A549 (cell line): ENCODE measurements at regions of chr19 and their contacts with region 1.

Region 1: GRCh38 chr19:41706741-41707501 is 1.5 kb upstream of the CEACAM5 start:
- DNase-seq: peak; percentile 91 to 99
- ATAC-seq: peak; percentile 79 to 94
- H3K4me3 ChIP-seq: peak overlapping the region; percentile 39
- H3K27ac ChIP-seq: peak overlapping the region; percentile 65 to 84; a peak in 5 of 6 replicates
- H3K4me1 ChIP-seq: peaks cover 28% of the 10 kb centered on the region
- CTCF ChIP-seq: peak; percentile 100
- EP300 ChIP-seq: no peak
- POLR2A ChIP-seq: no peak
- RAD21 ChIP-seq: peak; percentile 61 to 86

Region 2: DNA sequence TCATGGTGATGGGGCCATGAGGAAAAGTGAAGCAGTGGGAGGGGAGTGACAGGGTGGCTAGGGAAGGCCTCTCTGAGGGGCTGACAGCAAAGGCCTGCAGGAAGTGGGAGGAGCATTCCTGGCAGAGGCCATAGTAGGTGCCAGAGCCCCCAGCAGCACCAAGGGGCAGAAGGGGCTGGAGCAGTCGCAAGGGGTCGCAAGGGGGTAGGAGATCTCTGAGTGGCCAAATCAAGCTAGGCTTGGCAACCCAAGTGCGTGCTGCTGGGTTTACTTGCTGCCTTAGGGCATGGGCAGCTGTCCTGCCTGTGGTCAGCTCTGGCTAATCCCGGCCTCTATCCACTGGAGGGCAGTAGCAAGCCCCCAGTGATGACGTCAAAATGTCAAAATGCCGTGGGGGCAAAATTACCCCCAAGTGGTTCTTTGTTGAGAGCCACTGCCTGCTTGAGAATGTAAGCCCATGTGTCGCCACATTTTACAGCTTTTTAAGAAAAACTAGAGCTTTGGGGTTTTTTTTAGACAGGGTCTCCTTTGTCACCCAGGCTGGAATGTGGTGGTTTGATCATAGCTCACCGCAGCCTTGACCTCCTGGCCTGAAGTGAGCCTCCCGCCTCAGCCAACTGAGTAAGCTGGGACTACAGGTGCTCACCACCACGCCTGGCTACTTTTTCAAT is 385.2 kb before region 1 on chr19:
- CTCF ChIA-PET with region 1: no interaction called
- POLR2A ChIA-PET with region 1: no interaction called
- DNase-seq: peak; percentile 76 to 95
- ATAC-seq: peak; percentile 10 to 53; a peak in 3 of 6 replicates
- H3K4me3 ChIP-seq: no peak overlapping the region
- H3K27ac ChIP-seq: peak overlapping the region; percentile 81 to 91; a peak in 5 of 6 replicates
- H3K4me1 ChIP-seq: peaks cover 56% of the 10 kb centered on the region
- CTCF ChIP-seq: peak; percentile 88
- EP300 ChIP-seq: no peak
- POLR2A ChIP-seq: no peak
- RAD21 ChIP-seq: peak; percentile 61 to 62; a peak in 4 of 5 replicates

Region 3: DNA sequence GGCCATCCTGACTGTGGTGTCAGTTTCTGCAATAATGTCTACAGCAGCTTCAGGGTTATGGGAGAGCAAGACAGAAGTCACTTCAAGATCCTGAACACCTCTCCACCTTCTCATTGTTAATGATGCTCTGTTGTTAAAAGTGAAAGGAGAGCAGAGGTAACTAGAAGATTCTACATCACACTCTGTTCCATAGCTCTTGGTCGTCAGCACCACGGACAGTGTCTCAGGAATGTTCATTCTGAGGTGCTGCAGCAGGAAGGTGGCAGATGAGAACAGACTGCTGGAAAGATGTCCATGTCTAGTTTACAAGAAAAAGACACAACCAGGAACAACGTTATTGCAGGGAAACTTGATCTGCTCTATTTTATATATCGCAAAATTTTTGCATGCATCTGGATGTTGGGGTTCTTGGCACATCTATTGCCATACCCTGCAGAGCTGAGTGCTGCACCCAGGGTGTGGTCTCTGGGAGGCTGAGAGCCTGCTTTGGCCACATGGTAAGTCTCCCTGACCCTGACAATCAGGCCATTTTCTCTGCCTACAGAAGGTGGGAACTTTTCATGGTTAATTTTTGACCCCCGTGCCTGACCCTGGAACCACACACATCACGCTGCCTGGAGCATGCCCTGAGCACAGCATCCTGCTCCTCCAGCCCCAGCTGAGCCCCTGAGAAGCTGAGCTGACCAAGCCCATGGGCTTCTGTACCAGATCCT is 118.3 kb before region 1 on chr19:
- CTCF ChIA-PET with region 1: interaction called, 16 read pairs
- POLR2A ChIA-PET with region 1: no interaction called
- DNase-seq: peak; percentile 44 to 58
- ATAC-seq: peak; percentile 61 to 72; a peak in 5 of 6 replicates
- H3K4me3 ChIP-seq: no peak overlapping the region
- H3K27ac ChIP-seq: no peak overlapping the region
- H3K4me1 ChIP-seq: no peaks in the 10 kb centered on the region
- CTCF ChIP-seq: no peak
- EP300 ChIP-seq: no peak
- POLR2A ChIP-seq: no peak
- RAD21 ChIP-seq: no peak

Region 4: GRCh38 chr19:41657157-41657556 is 49.8 kb before region 1 on chr19:
- CTCF ChIA-PET with region 1: interaction called, 67 read pairs
- POLR2A ChIA-PET with region 1: no interaction called
- DNase-seq: no peak
- ATAC-seq: no peak
- H3K4me3 ChIP-seq: no peak overlapping the region
- H3K27ac ChIP-seq: no peak overlapping the region
- H3K4me1 ChIP-seq: no peaks in the 10 kb centered on the region
- CTCF ChIP-seq: no peak
- EP300 ChIP-seq: no peak
- POLR2A ChIP-seq: no peak
- RAD21 ChIP-seq: no peak

Region 5: DNA sequence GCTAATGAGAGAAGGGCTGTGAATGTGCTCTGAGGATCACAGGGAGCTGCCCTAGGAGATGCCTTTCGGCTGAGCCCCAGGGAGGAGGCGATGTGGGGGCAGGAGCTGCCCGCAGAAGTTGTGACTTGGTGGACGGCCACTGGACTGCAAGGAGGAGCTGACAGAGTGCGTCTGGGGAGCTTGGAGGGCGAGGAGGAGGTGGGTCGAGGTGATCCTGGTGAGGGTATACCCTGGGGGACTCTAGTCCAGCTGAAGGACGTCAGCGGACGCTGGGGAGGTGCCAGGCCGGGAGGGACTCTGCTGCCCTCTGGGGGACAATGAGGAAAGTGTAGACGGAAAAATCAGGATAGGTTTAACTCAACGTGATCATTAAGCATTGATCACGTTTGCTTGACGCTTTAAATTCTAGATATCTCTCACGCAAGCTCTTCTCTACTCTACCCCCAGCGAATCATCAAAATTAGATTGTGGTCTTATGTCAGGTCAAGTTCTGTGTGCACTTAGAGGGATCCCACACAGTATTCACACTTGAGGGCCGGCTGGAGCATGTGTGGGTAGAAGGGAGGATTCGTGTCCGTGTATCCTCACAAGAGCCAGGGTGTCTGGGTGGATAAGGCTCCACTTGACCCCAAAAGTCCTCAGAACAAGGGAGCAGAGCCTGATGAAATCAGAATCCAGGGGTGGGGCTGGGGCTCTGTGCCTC is 15.5 kb before region 1 on chr19:
- CTCF ChIA-PET with region 1: interaction called, 358 read pairs
- POLR2A ChIA-PET with region 1: no interaction called
- DNase-seq: peak; percentile 42 to 76
- ATAC-seq: peak; percentile 72 to 88
- H3K4me3 ChIP-seq: no peak overlapping the region
- H3K27ac ChIP-seq: no peak overlapping the region
- H3K4me1 ChIP-seq: no peaks in the 10 kb centered on the region
- CTCF ChIP-seq: peak; percentile 77
- EP300 ChIP-seq: no peak
- POLR2A ChIP-seq: no peak
- RAD21 ChIP-seq: peak; percentile 51 to 67; a peak in 4 of 5 replicates

Region 6: DNA sequence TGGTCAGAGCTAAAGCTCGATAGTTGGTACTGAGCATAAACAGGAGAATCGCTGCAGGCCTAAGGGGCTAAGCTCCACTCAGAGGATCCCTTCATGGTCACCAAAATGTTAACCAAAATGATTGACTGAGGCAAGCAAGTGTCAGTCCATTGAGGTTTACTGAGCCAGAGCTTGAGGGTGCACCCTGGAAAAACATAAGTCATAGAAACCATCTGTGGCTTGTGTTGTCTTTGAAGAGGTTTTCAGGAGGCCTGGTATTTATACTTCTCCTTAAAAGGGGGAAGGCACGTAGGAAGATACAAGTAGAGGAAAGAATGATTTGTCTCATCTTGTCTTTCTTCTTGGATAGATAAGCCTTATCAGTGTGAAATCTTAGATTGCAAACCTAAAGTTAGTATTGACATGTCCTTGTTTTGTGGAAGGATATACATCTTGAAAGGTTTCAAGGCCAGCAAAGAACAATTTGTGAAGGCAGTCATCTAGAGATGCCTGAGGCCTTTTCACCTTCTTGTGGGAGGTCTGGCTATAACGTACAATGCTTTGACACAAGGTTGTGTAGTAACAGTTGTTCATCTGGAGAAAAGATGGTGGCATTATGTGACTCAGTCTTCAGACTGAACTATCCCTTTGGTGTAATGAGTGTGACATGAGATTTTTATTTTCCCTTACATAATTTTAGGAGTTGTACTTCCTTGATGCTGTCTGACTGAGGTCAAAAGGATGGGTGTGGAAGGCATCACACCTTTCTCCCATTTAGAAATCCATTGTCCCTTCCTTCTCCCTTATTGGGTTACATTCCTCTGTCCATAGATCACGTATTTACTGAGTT is 33.7 kb after region 1 on chr19:
- CTCF ChIA-PET with region 1: interaction called, 95 read pairs
- POLR2A ChIA-PET with region 1: no interaction called
- DNase-seq: no peak
- ATAC-seq: no peak
- H3K4me3 ChIP-seq: no peak overlapping the region
- H3K27ac ChIP-seq: no peak overlapping the region
- H3K4me1 ChIP-seq: no peaks in the 10 kb centered on the region
- CTCF ChIP-seq: no peak
- EP300 ChIP-seq: no peak
- POLR2A ChIP-seq: no peak
- RAD21 ChIP-seq: no peak

Region 7: DNA sequence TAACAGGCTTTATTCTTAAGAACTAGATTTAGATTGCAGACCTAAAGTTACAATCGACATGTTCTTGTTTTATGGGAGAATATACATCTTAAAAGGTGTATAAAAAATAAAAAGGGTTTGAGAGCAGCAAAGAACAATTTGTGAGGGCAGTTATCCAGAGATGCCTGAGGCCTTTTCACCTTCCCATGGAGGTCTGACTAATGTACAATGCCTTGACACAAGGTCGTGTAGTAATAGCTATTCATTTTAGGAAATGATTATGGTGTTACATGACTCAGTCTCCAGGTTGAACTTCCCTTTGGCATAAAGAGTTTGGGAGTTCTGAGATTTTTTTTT is 68.4 kb after region 1 on chr19:
- CTCF ChIA-PET with region 1: interaction called, 28 read pairs
- POLR2A ChIA-PET with region 1: no interaction called
- DNase-seq: peak in 1 of 2 experiments; percentile 50
- ATAC-seq: no peak
- H3K4me3 ChIP-seq: no peak overlapping the region
- H3K27ac ChIP-seq: no peak overlapping the region
- H3K4me1 ChIP-seq: peaks cover 5% of the 10 kb centered on the region; the same call in 2 of the 3 replicates
- CTCF ChIP-seq: no peak
- EP300 ChIP-seq: no peak
- POLR2A ChIP-seq: no peak
- RAD21 ChIP-seq: no peak

Region 8: DNA sequence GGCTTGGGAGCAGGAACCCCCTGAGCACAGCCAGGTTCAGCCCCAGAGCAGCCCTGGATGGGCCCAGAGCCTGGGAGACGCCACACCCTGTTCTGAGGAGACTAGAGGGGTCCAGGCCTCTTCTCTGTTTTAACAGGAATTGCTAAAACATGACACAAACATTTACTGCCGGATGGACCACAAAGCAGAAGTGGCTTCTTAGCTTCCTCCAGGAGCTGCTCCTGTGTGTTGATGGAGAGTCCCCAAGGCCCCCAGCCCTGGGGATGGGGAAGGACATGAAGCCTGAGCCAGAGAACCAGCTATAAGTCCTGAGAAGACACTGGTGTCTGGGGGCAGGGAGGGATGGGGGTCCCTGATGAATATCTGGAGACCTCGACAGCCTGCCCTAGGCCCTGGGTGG is 104.1 kb after region 1 on chr19:
- CTCF ChIA-PET with region 1: interaction called, 11 read pairs
- POLR2A ChIA-PET with region 1: no interaction called
- DNase-seq: no peak
- ATAC-seq: no peak
- H3K4me3 ChIP-seq: no peak overlapping the region
- H3K27ac ChIP-seq: no peak overlapping the region
- H3K4me1 ChIP-seq: no peaks in the 10 kb centered on the region
- CTCF ChIP-seq: no peak
- EP300 ChIP-seq: no peak
- POLR2A ChIP-seq: no peak
- RAD21 ChIP-seq: no peak

Region 9: GRCh38 chr19:41883821-41884733 is 177.2 kb after region 1 on chr19:
- CTCF ChIA-PET with region 1: no interaction called
- POLR2A ChIA-PET with region 1: no interaction called
- DNase-seq: peak; percentile 100
- ATAC-seq: peak; percentile 78 to 97
- H3K4me3 ChIP-seq: peak overlapping the region; percentile 78
- H3K27ac ChIP-seq: peak overlapping the region; percentile 81 to 87
- H3K4me1 ChIP-seq: peaks cover 15% of the 10 kb centered on the region
- CTCF ChIP-seq: no peak; the same call in 2 of the 3 replicates
- EP300 ChIP-seq: peak in 1 of 2 experiments; percentile 53; a peak in 2 of 5 replicates
- POLR2A ChIP-seq: peak; percentile 73
- RAD21 ChIP-seq: no peak